Caco-2 (cell line): ENCODE measurements at regions of chr12 and their contacts with region 1.

Region 1: DNA sequence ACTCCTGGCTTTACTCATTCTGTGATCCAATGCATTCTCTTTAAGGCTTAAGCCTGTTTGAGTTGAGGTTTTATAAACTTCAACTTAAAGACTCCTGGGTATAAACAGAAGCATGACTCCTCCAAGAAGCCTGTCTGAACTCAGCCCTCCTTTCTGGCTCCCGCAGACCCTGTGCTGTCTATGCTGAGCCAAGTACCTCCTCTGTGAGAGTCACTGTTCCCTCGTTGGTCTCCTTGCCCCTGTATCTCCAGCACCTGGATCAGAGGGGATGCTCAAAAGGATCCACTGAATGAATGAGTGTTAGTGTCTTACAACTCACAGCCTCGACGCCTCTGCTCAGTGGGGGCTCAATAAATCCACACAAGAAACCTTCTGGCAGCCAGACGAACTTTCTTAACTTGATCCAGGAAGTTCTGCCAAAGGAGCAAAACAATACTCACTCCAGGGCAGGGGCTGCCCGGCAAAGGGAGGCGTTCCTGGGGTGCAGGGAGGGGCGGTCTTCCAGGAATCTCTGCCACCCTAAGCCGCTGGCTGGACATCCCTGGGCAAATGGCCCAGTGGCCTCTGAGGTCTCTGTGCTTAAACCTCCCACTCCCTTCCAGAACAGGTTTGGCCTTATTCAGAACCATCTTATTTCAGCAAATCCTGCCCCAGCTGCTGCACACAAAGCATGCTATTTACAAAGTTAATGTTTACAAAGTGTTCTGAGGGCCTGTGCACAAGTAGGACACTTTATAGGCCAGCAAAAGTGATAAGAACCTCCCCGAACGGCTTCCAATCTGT is 32.9 kb downstream of the MAP1LC3B2 start:
- DNase-seq: peak; percentile 65 to 70
- H3K4me3 ChIP-seq: no peak overlapping the region
- H3K4me3 Mint-ChIP-seq: peak overlapping the region; percentile 49
- H3K27ac Mint-ChIP-seq: peak overlapping the region; percentile 77
- H3K4me1 ChIP-seq: peaks cover 30% of the 10 kb centered on the region
- H3K4me1 Mint-ChIP-seq: peaks cover 35% of the 10 kb centered on the region
- H3K27me3 ChIP-seq: no peaks in the 10 kb centered on the region
- H3K27me3 Mint-ChIP-seq: no peaks in the 10 kb centered on the region
- CTCF ChIP-seq: no peak

Region 2: GRCh38 chr12:116164250-116165035 is 427.6 kb before region 1 on chr12:
- CTCF ChIA-PET with region 1: no interaction called
- POLR2A ChIA-PET with region 1: no interaction called
- intact Hi-C with region 1: no loop called
- DNase-seq: no peak
- H3K4me3 ChIP-seq: no peak overlapping the region
- H3K4me3 Mint-ChIP-seq: no peak overlapping the region
- H3K27ac Mint-ChIP-seq: no peak overlapping the region
- H3K4me1 ChIP-seq: peaks cover 18% of the 10 kb centered on the region; the same call in 1 of the 2 replicates
- H3K4me1 Mint-ChIP-seq: peaks cover 24% of the 10 kb centered on the region
- H3K27me3 ChIP-seq: no peaks in the 10 kb centered on the region
- H3K27me3 Mint-ChIP-seq: no peaks in the 10 kb centered on the region
- CTCF ChIP-seq: no peak

Region 3: DNA sequence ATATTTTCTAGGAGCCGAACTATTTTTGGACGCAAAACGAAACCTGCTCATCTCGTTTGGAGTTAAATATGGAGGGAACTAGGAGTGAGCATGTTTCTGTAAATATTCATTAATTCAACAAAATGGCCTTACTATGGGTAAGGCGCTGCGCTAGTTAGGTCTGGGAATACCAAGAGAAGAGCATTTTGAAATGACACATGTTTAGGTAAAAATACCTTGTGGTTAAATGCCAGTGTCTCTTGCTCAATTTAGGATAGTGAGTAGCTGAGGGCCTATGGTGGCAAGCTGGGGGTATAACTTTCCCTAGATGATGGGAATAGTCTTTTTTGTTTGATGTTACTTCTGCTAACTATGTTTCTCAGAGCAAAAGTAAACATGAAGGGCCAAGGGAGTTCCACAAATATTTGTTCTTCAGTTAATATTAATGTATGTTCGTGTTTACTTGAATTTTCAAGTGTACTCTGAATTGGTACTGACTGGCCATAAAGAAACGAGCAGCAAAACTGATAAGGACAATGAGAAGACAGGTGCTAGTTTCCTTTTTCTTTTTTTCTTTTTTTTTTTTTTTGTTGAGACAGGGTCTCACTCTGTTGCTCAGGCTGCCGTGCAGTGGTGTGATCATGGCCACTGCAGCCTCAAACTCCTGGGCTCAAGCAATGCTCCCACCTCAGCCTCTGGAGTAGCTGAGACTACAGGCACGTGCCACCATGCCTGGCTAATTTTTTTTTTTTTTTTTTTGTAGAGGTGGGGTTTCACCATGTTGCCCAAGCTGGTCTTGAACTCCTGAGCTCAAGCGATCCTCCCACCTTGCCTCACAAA is 44.9 kb after region 1 on chr12:
- CTCF ChIA-PET with region 1: interaction called, 6 read pairs
- POLR2A ChIA-PET with region 1: no interaction called
- intact Hi-C with region 1: loop called (anchors 1 kb)
- DNase-seq: peak; percentile 64 to 65
- H3K4me3 ChIP-seq: no peak overlapping the region
- H3K4me3 Mint-ChIP-seq: peak overlapping the region; percentile 63
- H3K27ac Mint-ChIP-seq: peak overlapping the region; percentile 87
- H3K4me1 ChIP-seq: peaks cover 63% of the 10 kb centered on the region
- H3K4me1 Mint-ChIP-seq: peaks cover 40% of the 10 kb centered on the region
- H3K27me3 ChIP-seq: no peaks in the 10 kb centered on the region
- H3K27me3 Mint-ChIP-seq: no peaks in the 10 kb centered on the region
- CTCF ChIP-seq: no peak

Region 4: DNA sequence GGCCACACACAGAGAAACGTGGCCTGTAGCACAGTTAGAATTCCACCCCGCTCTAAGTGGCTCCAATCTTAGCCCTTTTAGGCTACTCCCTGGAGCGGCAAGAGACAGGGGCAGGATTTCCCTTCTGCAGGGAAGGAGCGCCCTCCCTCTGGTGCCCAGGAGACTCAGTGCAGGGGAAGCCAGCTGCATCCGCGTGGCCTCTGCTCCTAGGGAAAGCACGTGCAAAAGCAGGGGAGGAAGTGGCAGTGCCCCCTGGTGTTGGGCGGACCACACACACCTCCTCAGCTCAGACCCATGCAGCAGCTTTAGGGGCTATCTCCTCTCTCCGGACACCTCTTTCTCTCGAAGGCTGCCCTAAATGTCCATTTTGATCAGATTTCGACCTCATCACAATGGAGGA is 95.8 kb after region 1 on chr12:
- CTCF ChIA-PET with region 1: interaction called, 7 read pairs
- POLR2A ChIA-PET with region 1: no interaction called
- intact Hi-C with region 1: loop called (anchors 1 kb)
- DNase-seq: peak; percentile 77 to 79
- H3K4me3 ChIP-seq: no peak overlapping the region
- H3K4me3 Mint-ChIP-seq: no peak overlapping the region
- H3K27ac Mint-ChIP-seq: no peak overlapping the region
- H3K4me1 ChIP-seq: no peaks in the 10 kb centered on the region
- H3K4me1 Mint-ChIP-seq: peaks cover 14% of the 10 kb centered on the region
- H3K27me3 ChIP-seq: no peaks in the 10 kb centered on the region; the same call in 1 of the 2 replicates
- H3K27me3 Mint-ChIP-seq: no peaks in the 10 kb centered on the region
- CTCF ChIP-seq: peak; percentile 59 to 83

Region 5: DNA sequence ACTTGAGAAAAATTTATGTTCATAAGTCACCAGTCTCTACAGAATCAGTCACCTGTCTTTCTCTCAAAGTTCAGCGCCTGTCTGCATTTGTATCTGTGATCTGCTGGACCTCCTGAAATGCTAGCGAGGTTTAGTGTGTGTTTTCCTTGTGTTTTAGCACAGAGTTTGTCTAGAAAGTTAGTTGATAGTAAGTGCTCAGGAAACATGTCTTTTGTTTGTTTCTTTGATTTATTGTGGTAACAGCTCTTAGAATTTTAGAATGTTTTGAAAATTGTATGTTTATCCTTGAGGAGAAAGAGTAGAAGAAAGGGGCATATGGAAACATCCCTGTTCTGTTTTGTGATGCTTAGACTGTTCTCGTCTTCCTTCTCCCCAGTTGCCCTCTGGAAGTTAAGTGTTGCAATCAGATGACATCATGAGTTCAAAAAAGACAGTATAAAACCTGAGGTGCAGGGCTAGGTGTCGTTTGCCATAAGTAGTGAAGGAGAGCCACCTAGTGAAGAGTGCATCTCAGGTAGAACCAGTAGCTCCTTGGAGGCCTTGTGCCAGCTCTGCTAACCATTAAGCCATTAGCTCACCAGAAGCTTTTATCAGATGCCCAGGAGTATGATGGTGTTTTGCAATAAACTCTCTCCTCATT is 363.5 kb after region 1 on chr12:
- CTCF ChIA-PET with region 1: interaction called, 3 read pairs
- POLR2A ChIA-PET with region 1: no interaction called
- intact Hi-C with region 1: loop called (anchors 5 kb)
- DNase-seq: peak; percentile 63 to 74
- H3K4me3 ChIP-seq: no peak overlapping the region
- H3K4me3 Mint-ChIP-seq: no peak overlapping the region
- H3K27ac Mint-ChIP-seq: no peak overlapping the region
- H3K4me1 ChIP-seq: no peaks in the 10 kb centered on the region
- H3K4me1 Mint-ChIP-seq: peaks cover 11% of the 10 kb centered on the region
- H3K27me3 ChIP-seq: no peaks in the 10 kb centered on the region
- H3K27me3 Mint-ChIP-seq: no peaks in the 10 kb centered on the region
- CTCF ChIP-seq: peak; percentile 30 to 64